ENCODE measurements at regions of chr1 and their contacts with region 1.

Region 1: DNA sequence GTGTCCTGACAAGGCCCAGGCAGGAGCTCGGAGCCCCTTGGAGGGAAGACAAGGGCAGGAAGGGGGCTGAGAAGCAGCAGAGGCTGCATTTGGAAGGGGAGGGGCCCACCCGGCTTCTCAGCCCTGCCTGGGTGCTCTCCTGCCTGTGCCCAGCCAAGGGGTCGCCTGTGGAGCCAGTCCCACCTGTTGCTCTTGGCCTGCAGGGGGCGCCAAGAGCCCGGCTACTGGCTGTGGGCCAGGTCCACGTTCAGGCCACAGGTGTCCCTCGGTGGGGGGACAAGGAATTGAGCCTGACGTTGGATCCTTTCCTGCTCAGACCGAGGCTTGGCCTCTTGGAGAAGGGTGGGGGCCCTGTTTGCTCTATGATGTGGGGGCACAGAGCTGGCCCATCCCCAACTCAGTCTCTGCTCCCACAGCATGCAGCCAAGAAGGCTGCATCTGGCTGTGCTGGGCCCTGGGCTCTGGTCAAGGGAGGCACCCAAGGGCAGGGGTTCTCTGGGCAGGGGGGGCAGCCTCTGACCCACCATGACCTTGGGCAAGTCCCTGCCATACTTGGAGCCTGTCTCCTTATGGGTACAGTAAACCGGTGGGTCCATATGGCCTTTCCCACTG is 10.9 kb downstream of the WNT4 start:
- DNase-seq: peak in 2 of 4 donors; percentile 65 to 88
- ATAC-seq: peak; percentile 76
- H3K4me3 ChIP-seq: no peak overlapping the region
- H3K27ac ChIP-seq: no peak overlapping the region
- H3K4me1 ChIP-seq: peaks cover 0 to 14% of the 10 kb centered on the region in 2 donors
- H3K27me3 ChIP-seq: peaks cover 0 to 32% of the 10 kb centered on the region in 2 donors
- CTCF ChIP-seq: peak; percentile 58 to 77

Region 2: GRCh38 chr1:22289307-22289995 is 157.5 kb after region 1 on chr1:
- intact Hi-C with region 1: loop called in 1 of 2 experiments (anchors 10 kb)
- DNase-seq: no peak
- ATAC-seq: no peak
- H3K4me3 ChIP-seq: no peak overlapping the region
- H3K27ac ChIP-seq: no peak overlapping the region
- H3K4me1 ChIP-seq: no peaks in the 10 kb centered on the region
- H3K27me3 ChIP-seq: peaks cover 0 to 5% of the 10 kb centered on the region in 2 donors
- CTCF ChIP-seq: no peak

Region 3: DNA sequence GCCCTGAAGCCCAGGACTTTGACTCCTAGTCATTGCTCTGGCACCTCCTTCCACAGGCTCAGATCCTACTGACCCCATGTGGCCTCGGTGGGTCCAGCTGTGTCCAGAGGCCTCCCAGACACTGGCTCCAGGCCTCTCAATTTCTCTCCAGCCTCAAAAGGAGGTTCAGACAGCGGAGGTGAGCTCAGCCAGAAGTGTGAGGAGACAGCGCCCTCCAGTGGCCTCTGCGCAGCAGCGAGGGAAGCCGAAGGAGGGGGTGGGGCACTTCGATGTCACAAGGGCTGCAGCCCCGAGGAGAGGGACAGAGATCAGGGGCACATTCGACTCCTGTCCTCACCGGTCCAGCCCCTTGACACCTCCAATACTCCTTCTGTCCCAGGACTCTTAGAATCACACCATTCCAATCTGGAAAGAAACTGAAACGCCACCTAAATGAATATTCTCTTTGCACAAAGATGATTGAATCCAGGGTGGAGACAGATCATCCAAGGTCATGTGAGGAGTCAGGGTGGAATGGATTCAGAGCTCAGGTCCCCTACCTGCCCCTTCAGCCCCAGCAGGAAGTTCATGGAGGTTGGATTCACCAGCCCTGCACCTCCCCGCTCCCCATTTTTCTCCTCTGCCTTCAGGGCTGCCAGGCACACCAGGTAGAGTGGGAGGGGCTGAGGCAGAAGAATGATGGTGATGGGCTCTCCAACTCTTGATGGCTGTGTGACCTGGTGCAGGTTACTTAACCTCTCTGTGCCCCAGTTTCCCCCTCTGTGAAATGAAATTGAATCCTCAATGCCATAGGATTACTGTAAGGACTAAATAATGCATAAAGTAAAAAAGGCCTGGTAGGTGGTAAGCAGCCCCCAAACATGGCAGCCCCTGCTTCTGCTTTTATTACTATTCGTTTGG is 284.8 kb after region 1 on chr1:
- intact Hi-C with region 1: loop called in 1 of 2 experiments (anchors 10 kb)
- DNase-seq: peak; percentile 54 to 85 (median 76)
- ATAC-seq: peak; percentile 62
- H3K4me3 ChIP-seq: no peak overlapping the region
- H3K27ac ChIP-seq: no peak overlapping the region
- H3K4me1 ChIP-seq: peaks cover 9 to 13% of the 10 kb centered on the region in 2 donors
- H3K27me3 ChIP-seq: peaks cover 6 to 38% of the 10 kb centered on the region in 2 donors
- CTCF ChIP-seq: peak; percentile 75 to 79